ENCODE measurements at regions of chr9 and their contacts with region 1.

Region 1: DNA sequence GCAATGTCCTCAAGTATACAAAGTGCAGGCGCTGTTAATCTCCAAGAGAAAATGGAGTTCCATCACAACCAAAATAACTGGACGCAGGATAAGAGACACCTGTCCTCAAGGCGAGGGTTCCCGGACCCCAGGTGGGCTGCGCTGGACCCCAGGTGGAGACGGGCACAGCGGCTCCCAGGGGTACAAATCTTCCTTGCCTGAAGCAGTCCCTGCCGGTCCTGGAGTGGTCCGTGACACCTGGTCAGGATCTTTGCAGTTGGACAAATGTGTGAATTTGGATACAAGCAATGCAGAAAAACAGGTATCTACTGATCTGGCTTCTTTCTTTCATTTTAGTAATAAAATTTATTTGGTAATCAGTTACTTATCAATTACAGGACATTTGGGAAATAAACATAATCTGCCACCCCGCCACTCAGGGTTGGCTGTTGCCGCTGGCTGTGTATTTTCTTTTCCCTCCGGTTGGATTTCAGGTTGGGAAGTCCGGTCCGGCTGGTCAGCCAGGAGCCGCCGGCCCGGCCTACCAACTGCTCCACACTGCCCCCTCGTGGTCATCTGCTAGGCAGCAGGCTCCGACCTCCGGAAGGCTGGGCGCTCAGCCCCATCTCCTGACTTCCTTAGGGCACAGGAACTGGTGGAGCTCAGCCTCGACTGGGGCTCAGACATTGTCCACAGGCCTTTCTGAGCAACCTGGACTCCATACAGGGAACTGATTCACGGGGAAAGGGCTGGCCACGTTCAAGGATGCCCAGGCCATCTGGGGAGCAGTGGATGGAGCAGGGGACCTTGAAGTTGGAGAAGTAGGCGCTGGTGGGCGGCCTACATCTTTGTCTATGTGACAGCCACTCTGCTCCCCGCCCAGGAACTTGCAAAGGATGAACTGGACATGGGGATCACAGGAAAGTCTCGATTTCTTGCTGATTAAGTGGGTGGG is 43.4 kb downstream of the NXNL2 start:
- DNase-seq: peak; percentile 52 to 87
- H3K4me3 ChIP-seq: peak overlapping the region; percentile 25; the same call in 1 of the 2 replicates
- H3K27ac ChIP-seq: no peak overlapping the region
- H3K4me1 ChIP-seq: peaks cover 4% of the 10 kb centered on the region; the same call in 1 of the 2 replicates
- H3K27me3 ChIP-seq: no peaks in the 10 kb centered on the region
- CTCF ChIP-seq: peak; percentile 93

Region 2: DNA sequence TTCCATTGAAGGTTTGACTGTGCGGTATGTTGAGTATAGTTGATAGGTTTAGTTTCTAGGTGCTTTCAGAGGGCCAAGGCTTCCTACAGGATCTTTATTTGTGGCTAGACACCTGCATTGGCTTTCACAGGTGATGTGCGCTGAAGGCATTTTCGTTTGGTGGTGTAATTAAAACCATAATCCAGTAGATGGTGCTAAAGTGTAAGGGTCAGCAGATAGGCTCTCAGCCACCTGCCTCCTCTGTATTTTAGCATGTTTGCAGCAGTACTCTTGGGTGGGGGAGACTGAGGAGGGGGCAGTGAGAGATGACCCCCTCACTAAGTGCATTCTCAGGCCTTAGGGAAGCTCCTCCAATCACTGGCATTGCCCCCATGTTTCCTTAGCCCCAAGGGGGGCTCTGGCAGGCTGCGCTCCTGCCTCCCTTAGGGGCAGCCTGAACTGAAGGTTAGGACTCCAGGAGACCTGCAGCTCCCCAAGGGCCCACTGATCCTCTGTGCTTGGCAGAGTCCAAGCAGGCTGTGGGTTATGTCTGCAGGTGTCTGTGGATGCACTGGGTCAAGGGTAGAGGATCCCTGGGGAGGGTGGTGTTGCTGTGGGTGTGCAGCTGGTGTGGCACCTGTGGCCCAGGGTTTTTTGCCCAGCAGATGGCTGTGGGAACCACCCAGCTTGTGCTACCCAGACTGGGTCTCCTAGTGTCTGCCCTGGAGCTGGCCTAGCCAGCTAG is 627.5 kb before region 1 on chr9:
- CTCF ChIA-PET with region 1: no interaction called
- POLR2A ChIA-PET with region 1: no interaction called
- intact Hi-C with region 1: loop called (anchors 2 kb)
- DNase-seq: no peak
- H3K4me3 ChIP-seq: no peak overlapping the region
- H3K27ac ChIP-seq: no peak overlapping the region
- H3K4me1 ChIP-seq: no peaks in the 10 kb centered on the region
- H3K27me3 ChIP-seq: no peaks in the 10 kb centered on the region
- CTCF ChIP-seq: peak; percentile 81

Region 3: DNA sequence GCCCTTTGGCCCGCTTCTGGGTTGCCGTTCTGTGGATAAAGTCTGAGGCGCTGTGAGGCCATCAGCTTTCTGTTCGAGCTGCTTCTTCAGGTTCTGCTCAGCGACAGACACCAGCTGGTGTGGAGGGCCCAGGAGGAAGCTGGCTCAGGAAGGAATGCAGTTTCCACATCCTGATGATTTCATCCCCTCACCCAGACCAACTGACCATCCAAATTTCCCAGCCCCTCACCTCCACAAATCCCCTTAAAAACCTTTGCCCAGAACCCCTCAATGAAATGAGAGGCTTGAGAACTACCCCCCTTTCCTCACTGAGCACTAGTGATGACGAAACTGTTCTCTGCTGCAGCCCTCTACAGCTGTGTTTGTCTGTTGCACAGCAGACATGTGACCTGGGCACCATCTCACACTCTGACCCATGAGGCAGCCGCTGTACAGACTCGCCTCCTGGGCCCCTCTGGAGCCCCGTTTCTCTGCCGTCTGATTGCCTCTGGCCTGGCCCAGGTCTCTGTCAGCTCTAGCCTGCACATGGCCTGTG is 485.5 kb before region 1 on chr9:
- CTCF ChIA-PET with region 1: no interaction called
- POLR2A ChIA-PET with region 1: interaction called, 17 read pairs
- intact Hi-C with region 1: no loop called
- DNase-seq: no peak
- H3K4me3 ChIP-seq: no peak overlapping the region
- H3K27ac ChIP-seq: no peak overlapping the region
- H3K4me1 ChIP-seq: 0 out of 2 replicates have a peak, but pooled peaks cover 8% of the 10 kb centered on the region
- H3K27me3 ChIP-seq: no peaks in the 10 kb centered on the region
- CTCF ChIP-seq: no peak

Region 4: GRCh38 chr9:88173378-88173999 is 404.9 kb before region 1 on chr9:
- CTCF ChIA-PET with region 1: no interaction called
- POLR2A ChIA-PET with region 1: no interaction called
- intact Hi-C with region 1: loop called (anchors 1 kb)
- DNase-seq: peak; percentile 70 to 75
- H3K4me3 ChIP-seq: no peak overlapping the region
- H3K27ac ChIP-seq: no peak overlapping the region
- H3K4me1 ChIP-seq: no peaks in the 10 kb centered on the region
- H3K27me3 ChIP-seq: no peaks in the 10 kb centered on the region
- CTCF ChIP-seq: peak; percentile 88

Region 5: GRCh38 chr9:88272986-88273385 is 305.4 kb before region 1 on chr9:
- CTCF ChIA-PET with region 1: no interaction called
- POLR2A ChIA-PET with region 1: no interaction called
- intact Hi-C with region 1: no loop called
- DNase-seq: no peak
- H3K4me3 ChIP-seq: no peak overlapping the region
- H3K27ac ChIP-seq: no peak overlapping the region
- H3K4me1 ChIP-seq: peaks cover 36% of the 10 kb centered on the region
- H3K27me3 ChIP-seq: no peaks in the 10 kb centered on the region
- CTCF ChIP-seq: no peak

Region 6: DNA sequence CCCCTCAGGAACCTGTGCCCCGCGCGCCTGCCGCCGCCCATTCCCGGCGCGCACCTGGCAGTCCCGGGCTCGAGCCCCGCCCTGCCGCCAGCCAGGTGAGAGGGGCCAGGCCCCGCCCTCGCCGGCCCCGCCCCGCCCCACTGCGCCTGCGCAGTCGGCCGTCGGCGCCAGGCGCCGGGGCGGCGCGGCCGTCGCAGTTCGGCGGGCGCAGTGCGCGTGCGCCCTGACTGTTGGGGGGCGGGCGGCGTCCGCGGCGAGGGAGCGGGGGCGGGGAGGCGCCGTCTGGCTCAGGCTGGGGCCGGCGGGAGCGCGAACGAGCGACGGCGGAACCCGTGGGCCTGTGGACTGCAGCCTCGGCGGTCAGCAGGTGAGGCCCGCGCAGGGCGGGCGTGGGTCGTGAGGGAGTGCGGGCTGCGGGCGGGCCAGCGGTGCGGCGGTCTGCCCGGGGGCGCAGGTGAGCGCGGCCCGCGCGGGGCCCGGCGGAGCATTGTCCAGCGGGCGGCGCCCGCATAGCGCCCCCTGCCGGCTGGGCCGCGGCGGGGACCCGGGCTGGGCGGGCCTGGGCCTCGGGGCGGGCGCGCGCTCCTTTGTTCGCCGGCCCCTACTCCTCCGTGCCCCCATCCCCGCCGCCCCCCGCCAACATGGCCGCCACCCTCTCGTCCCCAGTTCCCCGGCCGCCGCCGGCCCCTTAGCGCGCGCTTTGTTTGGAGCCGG is 190.1 kb before region 1 on chr9 and contains the start of gene SPIN1:
- CTCF ChIA-PET with region 1: no interaction called
- POLR2A ChIA-PET with region 1: no interaction called
- intact Hi-C with region 1: loop called (anchors 5 kb)
- DNase-seq: peak in 1 of 2 experiments; percentile 95
- H3K4me3 ChIP-seq: peak within 1 kb of the TSS; percentile 99
- H3K27ac ChIP-seq: peak within 1 kb of the TSS; percentile 76
- H3K4me1 ChIP-seq: peaks cover 29% of the 10 kb centered on the region
- H3K27me3 ChIP-seq: no peaks in the 10 kb centered on the region
- CTCF ChIP-seq: no peak
- total RNA-seq, gene SPIN1: 102 and 112 TPM in 2 replicates

Region 7: DNA sequence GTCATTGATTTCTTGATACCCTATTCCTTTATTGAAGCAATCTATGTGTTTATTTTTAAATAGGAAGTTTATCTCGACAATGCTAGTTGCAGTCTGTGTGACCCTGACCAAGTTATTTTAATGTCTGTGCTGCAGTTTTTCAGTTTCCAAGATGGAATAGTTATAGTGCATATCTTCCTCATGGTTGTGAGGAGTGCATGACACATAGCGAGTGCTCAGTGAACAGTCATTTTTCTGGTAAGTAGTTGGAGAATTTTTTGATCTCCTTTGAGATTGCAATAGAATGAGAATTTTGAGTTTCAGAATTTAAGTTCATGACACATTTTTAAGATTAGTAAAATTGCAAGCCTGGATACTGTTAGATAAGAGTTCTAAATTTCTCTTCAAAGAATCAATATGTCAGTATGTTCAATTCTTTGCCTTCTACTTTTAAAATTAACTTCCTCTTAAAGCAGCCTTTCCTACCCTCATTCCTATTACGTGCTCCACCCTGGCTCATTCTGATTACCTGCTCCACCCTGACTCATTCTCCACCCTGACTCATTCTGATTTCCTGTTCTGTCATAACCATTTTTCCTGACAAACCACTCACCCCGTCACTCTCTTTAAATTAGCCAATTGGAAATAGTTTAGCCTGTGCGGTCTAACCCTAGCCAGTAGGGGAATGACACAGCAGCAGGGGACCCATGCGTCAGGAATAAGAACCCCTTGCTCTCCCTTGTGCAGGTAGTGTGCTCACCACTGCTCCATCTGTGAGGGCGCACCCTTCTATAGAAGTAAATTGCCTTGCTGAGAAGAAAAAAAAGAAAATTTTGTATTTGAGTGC is 159.5 kb before region 1 on chr9:
- CTCF ChIA-PET with region 1: interaction called, 11 read pairs
- POLR2A ChIA-PET with region 1: no interaction called
- intact Hi-C with region 1: no loop called
- DNase-seq: no peak
- H3K4me3 ChIP-seq: no peak overlapping the region
- H3K27ac ChIP-seq: no peak overlapping the region
- H3K4me1 ChIP-seq: no peaks in the 10 kb centered on the region
- H3K27me3 ChIP-seq: no peaks in the 10 kb centered on the region
- CTCF ChIP-seq: no peak

Region 8: GRCh38 chr9:89000973-89001916 is 422.9 kb after region 1 on chr9:
- CTCF ChIA-PET with region 1: no interaction called
- POLR2A ChIA-PET with region 1: no interaction called
- intact Hi-C with region 1: loop called (anchors 5 kb)
- DNase-seq: peak; percentile 64 to 85
- H3K4me3 ChIP-seq: no peak overlapping the region
- H3K27ac ChIP-seq: no peak overlapping the region
- H3K4me1 ChIP-seq: 0 out of 2 replicates have a peak, but pooled peaks cover 7% of the 10 kb centered on the region
- H3K27me3 ChIP-seq: no peaks in the 10 kb centered on the region
- CTCF ChIP-seq: peak; percentile 85

Measured in PC-9 (cell line).